ENCODE measurements at regions of chr5 and their contacts with region 1.

Region 1: DNA sequence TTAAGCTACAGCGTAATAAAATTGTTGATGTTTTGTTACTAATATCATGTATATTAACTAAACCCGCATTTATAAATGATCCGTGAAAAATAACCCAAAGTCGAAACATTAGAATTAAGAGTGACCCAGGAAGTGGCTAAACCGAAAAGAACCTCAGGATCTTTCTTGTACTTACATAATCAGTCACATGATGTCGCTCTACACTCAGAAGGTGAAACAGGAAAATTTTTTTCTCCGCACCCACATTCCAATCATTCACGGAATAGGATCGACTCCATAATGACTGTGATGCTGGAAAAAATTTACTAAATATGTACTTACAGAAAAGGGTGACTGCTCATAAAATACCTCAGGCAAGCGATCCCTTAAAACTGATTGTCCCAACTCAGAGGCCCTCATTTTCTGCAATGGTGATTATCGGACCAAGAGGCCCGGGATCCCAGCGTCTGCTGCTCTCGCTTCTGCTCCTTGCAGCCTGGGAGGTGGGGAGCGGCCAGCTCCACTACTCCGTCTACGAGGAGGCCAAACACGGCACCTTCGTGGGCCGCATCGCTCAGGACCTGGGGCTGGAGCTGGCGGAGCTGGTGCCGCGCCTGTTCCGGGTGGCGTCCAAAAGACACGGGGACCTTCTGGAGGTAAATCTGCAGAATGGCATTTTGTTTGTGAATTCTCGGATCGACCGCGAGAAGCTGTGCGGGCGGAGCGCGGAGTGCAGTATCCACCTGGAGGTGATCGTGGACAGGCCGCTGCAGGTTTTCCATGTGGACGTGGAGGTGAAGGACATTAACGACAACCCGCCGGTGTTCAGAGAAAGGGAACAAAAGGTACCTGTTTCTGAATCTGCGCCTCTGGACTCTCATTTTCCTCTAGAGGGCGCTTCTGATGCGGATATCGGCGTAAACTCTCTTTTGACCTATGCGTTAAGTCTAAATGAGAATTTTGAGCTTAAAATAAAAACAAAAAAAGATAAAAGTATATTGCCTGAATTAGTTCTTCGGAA is at the start of gene PCDHA12:
- DNase-seq: no peak
- H3K4me3 ChIP-seq: no peak within 1 kb of the TSS
- H3K4me3 Mint-ChIP-seq: peak within 1 kb of the TSS in 1 of 2 donors; percentile 51
- H3K27ac ChIP-seq: no peak within 1 kb of the TSS
- H3K27ac Mint-ChIP-seq: no peak within 1 kb of the TSS
- H3K4me1 ChIP-seq: no peaks in the 10 kb centered on the region
- H3K4me1 Mint-ChIP-seq: no peaks in the 10 kb centered on the region
- H3K27me3 ChIP-seq: peaks cover 3 to 23% of the 10 kb centered on the region in 2 donors
- H3K27me3 Mint-ChIP-seq: peaks cover 23 to 32% (median 28%) of the 10 kb centered on the region in 3 donors
- CTCF ChIP-seq: no peak
- polyA plus RNA-seq, gene PCDHA12: not detected

Region 2: GRCh38 chr5:140806834-140807775 is 68.3 kb before region 1 on chr5 and contains the start of gene PCDHA4:
- intact Hi-C with region 1: loop called in 1 of 2 experiments (anchors 2 kb)
- DNase-seq: no peak
- H3K4me3 ChIP-seq: no peak within 1 kb of the TSS
- H3K4me3 Mint-ChIP-seq: peak within 1 kb of the TSS; percentile 28 to 59
- H3K27ac ChIP-seq: no peak within 1 kb of the TSS
- H3K27ac Mint-ChIP-seq: peak within 1 kb of the TSS in 1 of 7 donors; percentile 25
- H3K4me1 ChIP-seq: no peaks in the 10 kb centered on the region
- H3K4me1 Mint-ChIP-seq: no peaks in the 10 kb centered on the region
- H3K27me3 ChIP-seq: peaks cover 0 to 20% of the 10 kb centered on the region in 2 donors
- H3K27me3 Mint-ChIP-seq: peaks cover 4 to 21% (median 18%) of the 10 kb centered on the region in 3 donors
- CTCF ChIP-seq: no peak
- polyA plus RNA-seq, gene PCDHA4: not detected

Region 3: DNA sequence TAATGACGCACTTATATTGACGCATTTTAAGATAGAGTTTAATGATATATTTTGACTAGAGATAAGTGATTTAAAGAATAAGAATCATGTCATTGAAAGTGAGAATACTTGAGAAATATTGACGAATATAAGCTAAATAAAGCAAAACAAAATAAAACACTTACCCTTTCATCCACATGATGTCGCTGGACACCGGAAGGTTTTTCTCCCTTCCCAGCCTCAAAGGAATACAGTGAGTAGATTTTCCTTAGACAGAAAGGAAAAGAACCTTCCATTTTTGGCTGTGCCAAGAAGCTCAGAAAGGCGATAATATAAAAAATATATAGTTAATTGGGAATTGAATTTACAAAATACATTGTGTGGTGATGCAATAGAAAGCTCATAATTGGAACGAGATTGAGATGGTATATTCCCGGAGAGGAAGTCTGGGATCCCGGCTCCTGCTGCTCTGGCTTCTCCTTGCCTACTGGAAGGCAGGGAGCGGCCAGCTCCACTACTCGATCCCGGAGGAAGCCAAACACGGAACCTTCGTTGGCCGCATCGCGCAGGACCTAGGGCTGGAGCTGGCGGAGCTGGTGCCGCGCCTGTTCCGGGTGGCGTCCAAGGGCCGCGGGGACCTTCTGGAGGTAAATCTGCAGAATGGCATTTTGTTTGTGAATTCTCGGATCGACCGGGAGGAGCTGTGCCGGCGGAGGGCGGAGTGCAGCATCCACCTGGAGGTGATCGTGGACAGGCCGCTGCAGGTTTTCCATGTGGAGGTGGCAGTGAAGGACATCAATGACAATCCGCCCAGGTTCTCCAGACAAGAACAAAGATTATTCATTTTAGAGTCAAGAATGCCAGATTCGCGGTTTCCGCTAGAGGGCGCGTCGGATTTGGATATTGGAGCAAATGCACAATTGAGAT is 53.7 kb before region 1 on chr5 and contains the start of gene PCDHA5:
- intact Hi-C with region 1: loop called in 1 of 2 experiments (anchors 10 kb)
- DNase-seq: no peak
- H3K4me3 ChIP-seq: no peak within 1 kb of the TSS
- H3K4me3 Mint-ChIP-seq: no peak within 1 kb of the TSS
- H3K27ac ChIP-seq: no peak within 1 kb of the TSS
- H3K27ac Mint-ChIP-seq: no peak within 1 kb of the TSS
- H3K4me1 ChIP-seq: no peaks in the 10 kb centered on the region
- H3K4me1 Mint-ChIP-seq: no peaks in the 10 kb centered on the region
- H3K27me3 ChIP-seq: peaks cover 0 to 4% of the 10 kb centered on the region in 2 donors
- H3K27me3 Mint-ChIP-seq: peaks cover 5 to 9% (median 7%) of the 10 kb centered on the region in 3 donors
- CTCF ChIP-seq: peak; percentile 20
- polyA plus RNA-seq, gene PCDHA5: not detected

Region 4: DNA sequence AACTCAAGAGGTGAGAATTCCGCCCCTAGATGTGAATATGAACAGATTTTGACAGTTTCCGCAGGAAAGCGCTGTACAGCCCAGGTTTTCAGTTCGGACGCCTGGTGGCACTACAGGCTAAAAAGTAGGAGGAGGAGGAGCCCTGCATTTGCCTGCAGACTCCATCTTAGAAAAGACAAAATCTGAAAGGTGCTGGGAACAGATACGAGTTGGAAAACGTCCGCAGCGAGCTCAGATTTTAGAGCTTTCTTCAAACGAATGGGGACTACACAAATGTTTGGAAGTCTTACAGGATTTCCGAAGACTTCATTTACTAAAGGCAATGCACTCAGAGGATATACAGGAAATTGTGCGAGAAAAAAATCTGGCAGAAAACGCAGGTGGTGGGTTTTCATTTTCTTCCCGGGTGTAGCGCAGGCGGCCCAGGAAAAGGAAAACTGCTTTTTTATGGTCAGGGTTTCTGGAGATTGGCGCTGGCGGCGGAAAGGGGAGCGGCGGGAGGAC is 209.2 kb after region 1 on chr5:
- intact Hi-C with region 1: no loop called
- DNase-seq: no peak
- H3K4me3 ChIP-seq: no peak overlapping the region
- H3K4me3 Mint-ChIP-seq: peak overlapping the region in 1 of 2 donors; percentile 68
- H3K27ac ChIP-seq: no peak overlapping the region
- H3K27ac Mint-ChIP-seq: no peak overlapping the region
- H3K4me1 ChIP-seq: no peaks in the 10 kb centered on the region
- H3K4me1 Mint-ChIP-seq: no peaks in the 10 kb centered on the region
- H3K27me3 ChIP-seq: peaks cover 5 to 9% of the 10 kb centered on the region in 2 donors
- H3K27me3 Mint-ChIP-seq: peaks cover 9% of the 10 kb centered on the region in 3 donors
- CTCF ChIP-seq: no peak